ENCODE measurements at regions of chr4 and their contacts with region 1.

Region 1: DNA sequence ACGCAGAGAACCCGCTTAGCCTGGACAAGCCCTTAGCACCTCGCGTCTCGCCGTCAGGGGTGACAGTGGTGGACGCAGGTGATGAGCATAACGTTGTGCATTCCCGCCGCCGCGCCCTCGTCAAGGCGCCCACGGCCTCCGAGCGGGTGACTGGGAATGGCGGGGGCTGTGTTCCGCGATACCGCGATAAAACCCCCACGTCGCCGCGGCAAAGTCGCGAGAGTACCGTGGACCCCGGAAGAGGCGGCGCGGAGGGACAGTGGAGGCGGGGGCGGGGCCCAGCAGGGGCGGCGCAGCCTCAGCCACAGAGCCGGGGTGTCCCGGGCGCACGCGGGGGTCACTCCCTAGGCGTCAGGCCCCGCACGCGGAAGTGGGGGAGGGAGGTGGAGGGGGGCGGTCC is 53.8 kb downstream of the ZFYVE28 start:
- DNase-seq: peak in 1 of 2 donors; percentile 66
- H3K4me3 ChIP-seq: peak overlapping the region; percentile 54 to 62
- H3K27ac ChIP-seq: peak overlapping the region; percentile 12 to 20
- H3K4me1 ChIP-seq: peaks cover 0 to 22% (median 11%) of the 10 kb centered on the region in 4 donors
- H3K27me3 ChIP-seq: no peaks in the 10 kb centered on the region
- CTCF ChIP-seq: no peak

Region 2: DNA sequence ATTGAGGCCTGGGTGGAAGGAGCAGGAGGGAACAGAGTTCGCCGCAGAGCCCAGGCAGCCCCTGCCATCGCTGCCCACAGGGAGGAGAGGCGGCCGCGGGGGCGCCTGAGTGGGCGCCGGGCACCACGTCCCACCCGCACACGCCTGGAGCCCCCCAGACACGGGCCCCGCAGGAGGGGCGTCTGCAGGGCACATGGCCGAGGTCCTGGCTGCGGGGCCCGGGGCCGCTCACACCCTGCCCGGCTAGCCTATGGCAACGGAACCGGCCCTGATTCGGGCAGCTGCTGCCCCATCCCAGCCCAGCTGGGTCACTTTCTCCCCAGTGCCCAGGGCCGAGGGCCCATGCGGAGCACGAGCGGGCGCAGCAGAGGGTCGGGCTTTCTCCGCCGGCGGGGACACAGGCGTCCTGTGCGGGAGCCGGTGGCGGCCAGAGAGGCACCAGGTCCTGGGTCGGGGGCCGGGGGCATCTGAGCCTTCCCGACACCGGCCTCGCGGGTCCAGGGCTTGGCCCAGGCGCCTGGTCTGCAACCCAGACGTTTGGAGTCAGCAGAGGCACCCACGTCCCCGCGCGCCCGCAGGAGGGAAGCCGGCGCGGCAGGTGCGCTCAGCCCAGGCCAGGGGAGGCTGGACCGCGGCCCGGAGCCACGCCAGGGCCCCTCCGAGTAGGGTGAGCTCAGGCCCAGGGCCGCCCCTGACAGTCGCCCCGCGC is 771.8 kb before region 1 on chr4:
- intact Hi-C with region 1: loop called (anchors 5 kb)
- DNase-seq: no peak
- H3K4me3 ChIP-seq: no peak overlapping the region
- H3K27ac ChIP-seq: no peak overlapping the region
- H3K4me1 ChIP-seq: no peaks in the 10 kb centered on the region
- H3K27me3 ChIP-seq: peaks cover 0 to 53% of the 10 kb centered on the region in 2 donors
- CTCF ChIP-seq: no peak

Measured in tibial artery (tissue), 4 donors.